ENCODE measurements at regions of chr6 and their contacts with region 1.

Region 1: GRCh38 chr6:56359201-56359899 is 112.0 kb upstream of the COL21A1 start:
- DNase-seq: peak in 1 of 2 donors; percentile 51
- ATAC-seq: peak; percentile 85
- H3K4me3 ChIP-seq: no peak overlapping the region
- H3K27ac ChIP-seq: no peak overlapping the region
- H3K4me1 ChIP-seq: no peaks in the 10 kb centered on the region
- H3K27me3 ChIP-seq: no peaks in the 10 kb centered on the region

Region 2: DNA sequence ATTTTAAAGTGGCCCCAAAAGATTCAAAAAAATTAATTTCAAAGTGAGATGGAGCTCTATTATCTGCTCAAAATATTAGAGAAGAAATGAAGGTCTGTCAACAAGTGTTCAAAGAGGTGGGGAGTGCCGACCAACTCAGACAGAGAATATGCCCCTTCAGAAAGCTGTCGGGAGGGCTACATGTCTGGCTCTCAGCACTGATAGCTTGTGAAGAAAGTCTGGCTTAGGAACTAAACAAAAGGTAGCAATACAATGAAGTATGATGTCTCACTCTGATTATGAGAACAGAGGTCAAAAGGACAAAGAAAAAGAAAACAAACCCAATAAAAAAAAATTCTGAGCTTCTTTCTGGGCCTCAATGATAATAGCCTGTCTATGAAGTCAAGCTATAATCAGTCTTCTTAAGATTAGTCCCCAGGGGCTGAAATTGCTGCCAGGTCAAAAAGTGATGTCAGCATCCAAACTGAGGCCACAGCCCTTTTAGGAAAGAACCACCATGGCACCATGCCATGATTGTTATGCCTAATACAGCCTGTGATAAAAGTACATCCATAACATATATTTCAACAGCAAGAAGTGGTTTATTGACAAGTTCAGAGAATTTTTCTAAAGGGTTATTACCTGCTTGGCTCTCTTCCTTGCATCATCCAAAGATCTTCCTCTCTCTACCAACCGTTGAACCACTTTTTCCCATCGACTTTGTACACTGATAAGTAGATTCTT is 132.4 kb after region 1 on chr6:
- intact Hi-C with region 1: no loop called
- DNase-seq: peak in 1 of 2 donors; percentile 43
- ATAC-seq: peak; percentile 37
- H3K4me3 ChIP-seq: no peak overlapping the region
- H3K27ac ChIP-seq: no peak overlapping the region
- H3K4me1 ChIP-seq: no peaks in the 10 kb centered on the region
- H3K27me3 ChIP-seq: no peaks in the 10 kb centered on the region

Region 3: GRCh38 chr6:56579155-56579851 is 220.0 kb after region 1 on chr6:
- intact Hi-C with region 1: loop called (anchors 5 kb)
- DNase-seq: no peak
- ATAC-seq: no peak
- H3K4me3 ChIP-seq: no peak overlapping the region
- H3K27ac ChIP-seq: no peak overlapping the region
- H3K4me1 ChIP-seq: peaks cover 0 to 2% of the 10 kb centered on the region in 2 donors
- H3K27me3 ChIP-seq: no peaks in the 10 kb centered on the region

Region 4: GRCh38 chr6:56593801-56594318 is 234.5 kb after region 1 on chr6:
- intact Hi-C with region 1: loop called (anchors 2 kb)
- DNase-seq: no peak
- ATAC-seq: peak; percentile 36
- H3K4me3 ChIP-seq: no peak overlapping the region
- H3K27ac ChIP-seq: no peak overlapping the region
- H3K4me1 ChIP-seq: no peaks in the 10 kb centered on the region
- H3K27me3 ChIP-seq: no peaks in the 10 kb centered on the region